ENCODE measurements at regions of chr16 and their contacts with region 1.

Region 1: DNA sequence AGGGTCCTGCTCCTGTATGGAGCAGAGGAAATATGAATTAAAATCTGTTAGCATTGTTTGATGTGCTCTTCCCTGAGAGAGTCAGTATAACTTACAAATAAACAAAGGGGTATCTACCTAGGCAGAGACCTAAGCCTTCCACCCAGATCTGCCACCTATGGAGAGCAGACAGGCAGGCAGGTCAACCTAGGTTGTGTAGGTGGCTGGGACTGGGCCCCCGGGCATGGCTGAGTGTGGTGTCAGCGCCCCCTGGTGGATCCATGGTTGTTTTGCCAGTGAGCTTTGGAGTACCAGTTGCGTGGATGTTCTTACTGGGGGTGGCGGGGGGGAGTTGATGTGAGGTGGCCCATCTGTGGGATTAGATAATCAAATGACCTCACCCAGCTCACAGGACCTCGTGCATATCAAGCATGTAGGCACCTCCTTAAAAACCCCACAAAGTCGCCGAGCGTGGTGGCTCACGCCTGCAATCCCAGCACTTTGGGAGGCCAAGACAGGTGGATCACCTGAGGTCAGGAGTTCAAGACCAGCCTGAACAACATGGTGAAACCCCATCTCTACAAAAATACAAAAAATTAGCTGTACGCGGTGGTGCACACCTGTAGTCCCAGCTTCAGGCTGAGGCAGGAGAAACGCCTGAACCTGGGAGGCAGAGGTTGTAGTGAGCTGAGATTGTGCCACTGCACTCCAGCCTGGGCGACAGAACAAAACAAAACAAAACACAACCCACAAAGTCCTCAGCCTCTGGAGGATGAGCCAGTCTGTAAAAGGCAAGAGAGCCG is 17.6 kb downstream of the DUS2 start:
- DNase-seq: peak; percentile 75
- H3K4me3 ChIP-seq: no peak overlapping the region
- H3K27ac ChIP-seq: no peak overlapping the region
- H3K4me1 ChIP-seq: no peaks in the 10 kb centered on the region
- H3K27me3 ChIP-seq: no peaks in the 10 kb centered on the region
- CTCF ChIP-seq: peak; percentile 79 to 88
- POLR2A ChIP-seq: no peak

Region 2: DNA sequence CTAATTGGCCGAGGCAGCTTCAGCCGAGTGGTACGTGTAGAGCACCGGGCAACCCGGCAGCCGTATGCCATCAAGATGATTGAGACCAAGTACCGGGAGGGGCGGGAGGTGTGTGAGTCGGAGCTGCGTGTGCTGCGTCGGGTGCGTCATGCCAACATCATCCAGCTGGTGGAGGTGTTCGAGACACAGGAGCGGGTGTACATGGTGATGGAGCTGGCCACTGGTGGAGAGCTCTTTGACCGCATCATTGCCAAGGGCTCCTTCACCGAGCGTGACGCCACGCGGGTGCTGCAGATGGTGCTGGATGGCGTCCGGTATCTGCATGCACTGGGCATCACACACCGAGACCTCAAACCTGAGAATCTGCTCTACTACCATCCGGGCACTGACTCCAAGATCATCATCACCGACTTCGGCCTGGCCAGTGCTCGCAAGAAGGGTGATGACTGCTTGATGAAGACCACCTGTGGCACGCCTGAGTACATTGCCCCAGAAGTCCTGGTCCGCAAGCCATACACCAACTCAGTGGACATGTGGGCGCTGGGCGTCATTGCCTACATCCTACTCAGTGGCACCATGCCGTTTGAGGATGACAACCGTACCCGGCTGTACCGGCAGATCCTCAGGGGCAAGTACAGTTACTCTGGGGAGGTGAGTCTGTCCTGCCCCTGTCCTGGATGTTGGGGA is 131.5 kb before region 1 on chr16:
- CTCF ChIA-PET with region 1: no interaction called
- POLR2A ChIA-PET with region 1: no interaction called
- dilution Hi-C with region 1: no loop called
- intact Hi-C with region 1: no loop called
- DNase-seq: no peak
- H3K4me3 ChIP-seq: no peak overlapping the region
- H3K27ac ChIP-seq: no peak overlapping the region
- H3K4me1 ChIP-seq: no peaks in the 10 kb centered on the region
- H3K27me3 ChIP-seq: no peaks in the 10 kb centered on the region
- CTCF ChIP-seq: no peak
- POLR2A ChIP-seq: no peak

Region 3: DNA sequence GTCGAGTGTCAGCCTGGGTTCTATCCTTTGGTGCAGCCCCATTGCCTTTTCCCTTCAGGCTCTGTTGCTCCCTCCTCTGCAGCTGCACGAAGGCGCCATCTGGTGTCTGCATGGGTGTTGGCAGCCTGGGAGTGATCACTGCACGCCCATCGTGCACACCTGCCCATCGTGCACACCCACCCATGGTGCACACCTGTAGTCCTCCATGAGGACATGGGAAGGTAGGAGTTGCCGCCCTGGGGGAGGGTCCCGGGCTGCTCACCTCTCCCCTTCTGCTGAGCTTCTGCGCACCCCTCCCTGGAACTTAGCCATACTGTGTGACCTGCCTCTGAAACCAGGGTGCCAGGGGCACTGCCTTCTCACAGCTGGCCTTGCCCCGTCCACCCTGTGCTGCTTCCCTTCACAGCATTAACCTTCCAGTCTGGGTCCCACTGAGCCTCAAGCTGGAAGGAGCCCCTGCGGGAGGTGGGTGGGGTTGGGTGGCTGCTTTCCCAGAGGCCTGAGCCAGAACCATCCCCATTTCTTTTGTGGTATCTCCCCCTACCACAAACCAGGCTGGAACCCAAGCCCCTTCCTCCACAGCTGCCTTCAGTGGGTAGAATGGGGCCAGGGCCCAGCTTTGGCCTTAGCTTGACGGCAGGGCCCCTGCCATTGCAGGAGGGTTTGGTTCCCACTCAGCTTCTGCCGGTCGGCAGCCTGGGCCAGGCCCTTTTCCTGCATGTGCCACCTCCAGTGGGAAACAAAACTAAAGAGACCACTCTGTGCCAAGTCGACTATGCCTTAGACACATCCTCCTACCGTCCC is 111.9 kb before region 1 on chr16:
- CTCF ChIA-PET with region 1: interaction called, 19 read pairs
- POLR2A ChIA-PET with region 1: no interaction called
- dilution Hi-C with region 1: no loop called
- intact Hi-C with region 1: loop called (anchors 2 kb)
- DNase-seq: peak; percentile 50
- H3K4me3 ChIP-seq: no peak overlapping the region
- H3K27ac ChIP-seq: no peak overlapping the region
- H3K4me1 ChIP-seq: peaks cover 10% of the 10 kb centered on the region
- H3K27me3 ChIP-seq: no peaks in the 10 kb centered on the region
- CTCF ChIP-seq: peak; percentile 87 to 93
- POLR2A ChIP-seq: no peak

Region 4: GRCh38 chr16:67967183-67967957 is 73.3 kb before region 1 on chr16:
- CTCF ChIA-PET with region 1: interaction called, 13 read pairs
- POLR2A ChIA-PET with region 1: interaction called, 3 read pairs
- dilution Hi-C with region 1: no loop called
- intact Hi-C with region 1: no loop called
- DNase-seq: peak; percentile 37
- H3K4me3 ChIP-seq: peak overlapping the region; percentile 92 to 97 (median 96)
- H3K27ac ChIP-seq: peak overlapping the region; percentile 70
- H3K4me1 ChIP-seq: peaks cover 22% of the 10 kb centered on the region
- H3K27me3 ChIP-seq: no peaks in the 10 kb centered on the region
- CTCF ChIP-seq: no peak
- POLR2A ChIP-seq: no peak

Region 5: GRCh38 chr16:67999985-68000384 is 40.7 kb before region 1 on chr16:
- CTCF ChIA-PET with region 1: interaction called, 47 read pairs
- POLR2A ChIA-PET with region 1: no interaction called
- dilution Hi-C with region 1: no loop called
- intact Hi-C with region 1: no loop called
- DNase-seq: no peak
- H3K4me3 ChIP-seq: no peak overlapping the region
- H3K27ac ChIP-seq: no peak overlapping the region
- H3K4me1 ChIP-seq: peaks cover 9% of the 10 kb centered on the region
- H3K27me3 ChIP-seq: no peaks in the 10 kb centered on the region
- CTCF ChIP-seq: no peak
- POLR2A ChIP-seq: no peak

Region 6: DNA sequence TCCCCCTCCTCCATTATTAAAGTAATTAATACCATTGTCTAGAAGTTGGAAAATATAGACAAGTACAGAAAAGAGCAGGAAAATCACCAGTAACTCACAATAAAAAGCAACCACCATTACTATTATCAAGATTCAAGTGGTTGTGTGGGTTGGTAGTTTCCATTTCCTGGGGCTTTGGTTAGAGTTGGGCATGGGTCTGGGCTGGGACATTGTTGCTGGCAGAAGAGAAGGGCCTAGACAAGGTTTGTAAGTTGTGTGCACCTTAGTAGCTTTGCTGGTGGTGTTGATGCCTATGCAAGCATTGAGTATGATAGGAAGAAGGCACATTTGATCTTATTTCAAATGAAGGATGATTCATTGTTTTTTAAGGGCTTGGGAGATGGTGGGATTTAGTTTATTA is 19.1 kb after region 1 on chr16:
- CTCF ChIA-PET with region 1: interaction called, 12 read pairs
- POLR2A ChIA-PET with region 1: no interaction called
- dilution Hi-C with region 1: no loop called
- intact Hi-C with region 1: no loop called
- DNase-seq: no peak
- H3K4me3 ChIP-seq: no peak overlapping the region
- H3K27ac ChIP-seq: no peak overlapping the region
- H3K4me1 ChIP-seq: peaks cover 18% of the 10 kb centered on the region
- H3K27me3 ChIP-seq: no peaks in the 10 kb centered on the region
- CTCF ChIP-seq: no peak
- POLR2A ChIP-seq: no peak

Region 7: GRCh38 chr16:68126395-68126794 is 85.7 kb after region 1 on chr16:
- CTCF ChIA-PET with region 1: no interaction called
- POLR2A ChIA-PET with region 1: no interaction called
- dilution Hi-C with region 1: no loop called
- intact Hi-C with region 1: no loop called
- DNase-seq: no peak
- H3K4me3 ChIP-seq: no peak overlapping the region
- H3K27ac ChIP-seq: no peak overlapping the region
- H3K4me1 ChIP-seq: peaks cover 16% of the 10 kb centered on the region
- H3K27me3 ChIP-seq: no peaks in the 10 kb centered on the region
- CTCF ChIP-seq: no peak
- POLR2A ChIP-seq: no peak

Measured in endothelial cell of umbilical vein (primary cell).